A673 (cell line): ENCODE measurements at regions of chr17 and their contacts with region 1.

Region 1: DNA sequence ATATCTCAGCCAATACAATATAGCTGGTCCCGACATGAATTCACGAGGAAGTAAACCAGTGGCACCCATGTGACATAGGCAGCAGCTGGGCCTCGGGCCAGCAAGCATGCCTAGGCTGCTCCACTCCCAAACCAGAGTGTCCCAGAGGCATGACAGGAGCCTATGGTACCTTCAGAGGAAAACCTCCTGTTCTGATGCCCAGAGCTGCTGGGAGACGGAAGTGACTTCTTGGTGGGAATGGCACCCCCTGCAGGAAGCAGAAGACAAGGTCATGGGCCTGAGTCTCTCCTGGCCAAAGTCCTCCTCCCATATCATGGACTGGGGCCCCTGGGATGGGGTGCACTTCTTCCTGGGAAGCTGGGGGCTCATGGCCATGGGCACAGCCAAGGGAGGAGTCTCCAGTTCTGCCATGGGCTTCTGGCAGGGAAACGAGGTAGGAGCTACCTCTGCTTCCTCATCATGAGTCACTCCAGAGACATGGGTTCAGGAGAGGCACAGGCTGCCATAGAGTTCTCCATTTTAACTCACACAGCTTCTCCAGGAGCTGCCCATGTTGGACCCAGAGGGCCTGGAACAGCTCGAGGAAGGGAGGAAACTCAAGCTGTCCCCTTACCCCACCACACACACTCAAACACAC is 13.4 kb downstream of the FBF1 start:
- DNase-seq: peak; percentile 33
- H3K4me3 ChIP-seq: no peak overlapping the region
- H3K27ac ChIP-seq: no peak overlapping the region
- H3K4me1 ChIP-seq: no peaks in the 10 kb centered on the region
- H3K27me3 ChIP-seq: no peaks in the 10 kb centered on the region
- CTCF ChIP-seq: peak; percentile 50

Region 2: GRCh38 chr17:76148015-76148326 is 220.6 kb after region 1 on chr17:
- CTCF ChIA-PET with region 1: interaction called, 11 read pairs
- POLR2A ChIA-PET with region 1: no interaction called
- intact Hi-C with region 1: no loop called
- DNase-seq: no peak
- H3K4me3 ChIP-seq: no peak overlapping the region
- H3K27ac ChIP-seq: no peak overlapping the region
- H3K4me1 ChIP-seq: peaks cover 36% of the 10 kb centered on the region
- H3K27me3 ChIP-seq: no peaks in the 10 kb centered on the region
- CTCF ChIP-seq: no peak